Kidney (tissue), 22 donors: ENCODE measurements at regions of chr5 and their contacts with region 1.

Region 1: GRCh38 chr5:73093943-73094342 is 26.4 kb upstream of the TMEM171 start:
- DNase-seq: no peak
- H3K4me3 ChIP-seq: no peak overlapping the region
- H3K27ac ChIP-seq: no peak overlapping the region
- H3K4me1 ChIP-seq: no peaks in the 10 kb centered on the region
- H3K27me3 ChIP-seq: no peaks in the 10 kb centered on the region
- CTCF ChIP-seq: no peak

Region 2: DNA sequence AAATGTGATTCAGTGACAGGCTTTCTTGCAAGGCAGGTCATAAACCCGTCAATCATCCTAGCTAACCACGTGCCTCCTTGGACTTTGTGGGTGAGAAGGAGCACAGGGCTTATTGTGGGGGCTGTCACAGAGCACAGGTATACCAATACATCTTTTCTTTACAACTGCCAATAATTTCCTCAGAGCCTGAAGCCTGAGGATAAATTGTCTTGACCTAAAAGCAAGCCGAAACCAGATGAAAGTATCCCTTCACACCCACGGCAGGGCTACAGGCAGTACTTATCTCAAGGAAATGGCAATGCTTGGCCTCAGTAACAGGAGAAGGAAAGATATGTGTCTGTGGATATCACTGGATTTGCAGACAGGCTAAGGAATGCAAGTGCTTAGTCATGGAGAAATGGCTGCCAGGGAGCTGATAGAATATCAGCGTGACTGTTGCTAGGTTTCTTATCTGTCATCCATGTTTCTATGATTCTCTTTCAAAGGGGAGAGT is 496.4 kb before region 1 on chr5:
- intact Hi-C with region 1: no loop called
- DNase-seq: peak in 3 of 5 donors; percentile 14 to 63 (median 46)
- H3K4me3 ChIP-seq: no peak overlapping the region
- H3K27ac ChIP-seq: no peak overlapping the region
- H3K4me1 ChIP-seq: peaks cover 0 to 6% (median 3%) of the 10 kb centered on the region in 3 donors
- H3K27me3 ChIP-seq: no peaks in the 10 kb centered on the region
- CTCF ChIP-seq: no peak

Region 3: DNA sequence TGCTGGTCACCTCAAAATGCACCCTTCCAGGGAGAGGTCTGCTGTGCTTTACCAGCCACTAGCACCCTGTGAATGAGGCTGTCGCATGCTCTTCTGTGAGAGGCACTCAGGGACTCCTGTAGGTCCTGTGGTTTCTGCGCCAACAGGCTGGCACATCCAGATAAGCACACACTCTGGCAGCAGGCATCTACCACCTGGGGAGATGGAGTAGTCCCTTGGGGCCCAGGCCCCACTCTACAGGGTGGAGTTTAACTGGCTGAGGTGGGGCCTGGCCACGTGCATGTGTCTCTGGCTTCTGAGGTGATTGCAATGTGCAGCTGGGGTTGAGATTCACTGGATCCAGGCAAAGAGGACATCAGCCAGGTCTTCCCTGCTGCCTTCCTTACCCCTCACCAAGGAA is 111.4 kb after region 1 on chr5:
- intact Hi-C with region 1: loop called (anchors 5 kb)
- DNase-seq: no peak
- H3K4me3 ChIP-seq: no peak overlapping the region
- H3K27ac ChIP-seq: no peak overlapping the region
- H3K4me1 ChIP-seq: no peaks in the 10 kb centered on the region
- H3K27me3 ChIP-seq: no peaks in the 10 kb centered on the region
- CTCF ChIP-seq: no peak